ENCODE measurements at regions of chr17 and their contacts with region 1.

Region 1: DNA sequence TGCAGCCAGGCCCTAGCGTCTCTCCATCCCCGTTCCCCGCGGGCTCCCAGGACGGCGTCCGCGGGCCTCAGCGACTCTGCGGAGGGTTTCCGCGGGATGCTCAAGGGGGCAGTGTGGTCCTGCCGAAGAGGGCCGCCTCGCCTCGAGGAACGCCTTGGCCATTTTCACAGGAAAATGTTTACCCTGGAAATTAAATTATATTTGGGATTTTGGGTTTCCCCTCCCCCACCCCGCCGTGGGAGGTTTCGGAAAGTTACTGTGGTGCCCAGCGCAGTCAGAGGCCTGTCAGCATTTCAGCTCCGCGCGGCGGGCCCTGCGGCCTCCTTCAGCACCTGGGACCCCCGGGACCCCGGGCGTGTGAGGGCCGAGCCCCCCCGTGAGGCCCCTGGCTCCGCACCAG is 94.5 kb downstream of the PCTP start:
- DNase-seq: peak; percentile 20
- ATAC-seq: peak; percentile 96
- H3K4me3 ChIP-seq: no peak overlapping the region
- H3K27ac ChIP-seq: no peak overlapping the region
- H3K4me1 ChIP-seq: no peaks in the 10 kb centered on the region
- H3K27me3 ChIP-seq: 0 out of 2 replicates have a peak, but pooled peaks cover 2% of the 10 kb centered on the region
- CTCF ChIP-seq: peak; percentile 60
- POLR2A ChIP-seq: no peak
- RAD21 ChIP-seq: peak; percentile 70

Region 2: GRCh38 chr17:55883149-55883548 is 37.8 kb after region 1 on chr17:
- CTCF ChIA-PET with region 1: no interaction called
- POLR2A ChIA-PET with region 1: no interaction called
- dilution Hi-C with region 1: no loop called
- in situ Hi-C with region 1: no loop called
- intact Hi-C with region 1: no loop called
- DNase-seq: no peak
- ATAC-seq: no peak
- H3K4me3 ChIP-seq: no peak overlapping the region
- H3K27ac ChIP-seq: no peak overlapping the region
- H3K4me1 ChIP-seq: no peaks in the 10 kb centered on the region
- H3K27me3 ChIP-seq: no peaks in the 10 kb centered on the region
- CTCF ChIP-seq: no peak
- POLR2A ChIP-seq: no peak
- RAD21 ChIP-seq: no peak

Region 3: DNA sequence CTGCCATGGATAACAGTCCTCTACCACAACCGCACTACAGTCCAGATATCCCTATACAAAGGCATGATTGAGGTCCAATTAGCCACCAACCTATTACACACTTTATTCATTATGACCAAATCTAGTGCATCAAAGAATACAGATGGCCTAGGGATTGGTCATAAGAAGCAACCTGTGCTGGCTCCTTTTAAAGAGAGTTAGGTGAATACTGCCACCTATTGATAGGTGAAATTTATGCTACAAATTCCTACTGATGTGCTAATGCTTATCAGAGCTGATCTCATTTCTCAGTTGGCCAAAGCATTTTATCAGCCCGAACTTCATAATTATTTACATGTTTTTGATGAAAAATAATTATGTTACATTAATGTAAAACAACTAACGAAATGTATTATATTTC is 474.1 kb after region 1 on chr17:
- CTCF ChIA-PET with region 1: interaction called, 3 read pairs
- POLR2A ChIA-PET with region 1: no interaction called
- dilution Hi-C with region 1: no loop called
- in situ Hi-C with region 1: no loop called
- intact Hi-C with region 1: loop called (anchors 5 kb)
- DNase-seq: peak; percentile 70
- ATAC-seq: peak; percentile 79
- H3K4me3 ChIP-seq: no peak overlapping the region
- H3K27ac ChIP-seq: no peak overlapping the region
- H3K4me1 ChIP-seq: peaks cover 3% of the 10 kb centered on the region
- H3K27me3 ChIP-seq: peaks cover 1% of the 10 kb centered on the region; the same call in 1 of the 2 replicates
- CTCF ChIP-seq: peak; percentile 66
- POLR2A ChIP-seq: no peak
- RAD21 ChIP-seq: peak; percentile 77

Region 4: GRCh38 chr17:56478836-56479447 is 633.6 kb after region 1 on chr17:
- CTCF ChIA-PET with region 1: no interaction called
- POLR2A ChIA-PET with region 1: no interaction called
- dilution Hi-C with region 1: no loop called
- in situ Hi-C with region 1: no loop called
- intact Hi-C with region 1: loop called (anchors 2 kb)
- DNase-seq: peak; percentile 25
- ATAC-seq: no peak
- H3K4me3 ChIP-seq: no peak overlapping the region
- H3K27ac ChIP-seq: no peak overlapping the region
- H3K4me1 ChIP-seq: no peaks in the 10 kb centered on the region
- H3K27me3 ChIP-seq: no peaks in the 10 kb centered on the region; the same call in 1 of the 2 replicates
- CTCF ChIP-seq: peak; percentile 48
- POLR2A ChIP-seq: no peak
- RAD21 ChIP-seq: peak; percentile 50

Region 5: GRCh38 chr17:56960596-56961538 is 1115.5 kb after region 1 on chr17 and contains the start of gene COIL:
- CTCF ChIA-PET with region 1: no interaction called
- POLR2A ChIA-PET with region 1: no interaction called
- dilution Hi-C with region 1: no loop called
- in situ Hi-C with region 1: no loop called
- intact Hi-C with region 1: loop called (anchors 10 kb)
- DNase-seq: peak; percentile 89
- ATAC-seq: peak; percentile 100
- H3K4me3 ChIP-seq: peak within 1 kb of the TSS; percentile 78
- H3K27ac ChIP-seq: peak within 1 kb of the TSS; percentile 89
- H3K4me1 ChIP-seq: peaks cover 4% of the 10 kb centered on the region; the same call in 1 of the 2 replicates
- H3K27me3 ChIP-seq: no peaks in the 10 kb centered on the region
- CTCF ChIP-seq: peak; percentile 99
- POLR2A ChIP-seq: peak; percentile 77
- RAD21 ChIP-seq: peak; percentile 65
- total RNA-seq, gene COIL: 13.3 and 21.7 TPM in 2 replicates

Measured in IMR-90 (cell line).